ENCODE measurements at regions of chrX and their contacts with region 1.

Region 1: DNA sequence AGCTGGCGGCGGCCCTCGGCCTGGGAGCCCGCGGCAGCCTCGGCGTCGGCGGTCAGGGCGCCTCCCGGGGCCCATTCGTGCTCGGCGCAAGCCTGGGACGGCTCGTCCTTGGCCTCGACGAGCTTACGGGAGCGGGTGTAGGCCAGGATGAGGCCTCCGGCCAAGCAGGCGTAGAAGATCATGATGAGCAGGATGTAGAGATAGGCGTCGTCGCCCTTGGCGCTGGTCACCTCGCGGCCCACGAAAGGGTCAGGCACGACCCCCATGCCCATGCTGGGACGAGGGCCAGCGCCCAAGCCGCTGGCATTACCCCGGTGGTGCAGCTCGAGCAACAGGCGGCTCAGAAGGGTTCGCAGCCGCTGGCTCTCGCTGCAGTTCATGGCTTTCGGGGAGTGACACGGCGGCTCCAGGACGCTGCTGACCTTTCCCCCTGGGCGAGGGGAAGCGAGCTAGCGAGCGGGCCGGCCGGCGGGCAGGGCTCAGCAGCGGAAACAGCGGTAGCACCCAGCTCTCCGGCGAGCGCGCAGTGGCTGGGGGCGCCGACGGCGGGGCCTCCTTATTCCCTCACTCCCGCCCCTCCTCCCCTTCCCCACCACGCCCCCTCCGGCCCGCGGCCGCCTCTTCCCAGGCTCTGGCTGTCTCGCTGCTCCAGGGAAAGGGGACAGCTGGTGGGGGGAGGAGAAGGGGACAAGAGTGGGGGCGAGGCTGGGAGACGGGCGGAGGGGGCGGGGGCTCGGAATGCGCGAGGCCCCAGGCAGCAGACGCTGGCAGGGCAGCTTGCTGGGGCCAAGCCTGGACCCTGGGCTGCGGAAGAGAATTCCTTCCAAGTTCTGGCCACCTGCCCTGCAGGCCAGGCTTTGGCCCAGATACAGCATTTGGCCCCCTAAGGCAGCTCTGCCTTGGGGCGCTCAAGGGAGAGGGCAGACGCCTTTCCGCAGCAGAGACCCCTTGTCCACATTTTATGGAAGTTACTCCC is at the start of gene KCNE5:
- DNase-seq: peak; percentile 57
- ATAC-seq: peak; percentile 37
- total RNA-seq, gene KCNE5: 0.43 TPM

Region 2: DNA sequence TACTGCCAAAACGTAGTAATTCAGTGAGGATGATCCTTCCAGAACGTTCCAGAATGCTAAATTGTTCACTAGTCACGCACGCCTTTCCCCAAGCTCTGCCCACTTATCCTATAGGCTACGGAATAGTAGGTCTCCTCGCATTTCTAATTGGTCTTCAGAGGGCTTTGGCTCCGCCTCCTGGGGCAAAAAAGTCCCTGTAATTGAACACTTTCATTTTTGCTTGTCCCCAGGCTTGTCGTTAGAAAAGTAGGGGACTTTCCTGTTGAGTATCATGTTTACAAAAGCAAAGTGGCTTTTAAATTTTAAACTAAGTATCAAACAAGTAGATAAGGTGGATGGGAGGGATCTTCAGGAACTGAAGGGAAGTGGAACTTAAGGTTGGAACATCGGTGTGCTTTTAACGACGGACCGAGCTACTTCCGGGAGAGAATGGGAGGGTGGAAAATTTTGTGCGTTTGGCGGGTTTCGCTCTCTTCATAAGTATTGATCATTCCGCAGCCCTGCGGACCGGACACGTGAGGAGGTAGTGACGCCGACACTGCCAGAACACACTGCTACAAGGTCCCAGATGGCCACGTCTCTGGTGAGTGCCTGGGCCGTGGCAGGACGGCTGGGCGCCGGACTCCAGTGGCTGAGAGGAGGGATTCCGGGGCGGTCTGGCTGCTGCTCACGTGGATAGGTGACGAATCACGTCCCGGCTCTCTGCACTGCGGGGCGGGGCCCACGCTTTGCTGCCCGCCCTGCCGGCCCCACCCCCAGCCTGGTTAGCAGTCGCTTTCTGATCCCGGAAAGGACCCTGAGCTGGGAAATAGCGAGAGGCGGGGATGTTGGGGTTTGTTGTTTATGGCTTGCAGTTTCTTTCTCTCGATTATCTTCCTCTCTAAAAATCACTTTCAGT is 88.2 kb before region 1 on chrX and contains the start of gene NXT2:
- intact Hi-C with region 1: loop called (anchors 5 kb)
- DNase-seq: peak; percentile 95
- ATAC-seq: peak; percentile 100
- total RNA-seq, gene NXT2: 2.2 TPM

Measured in Right ventricle myocardium inferior (tissue), 1 donor.